ENCODE measurements at regions of chr3 and their contacts with region 1.

Region 1: DNA sequence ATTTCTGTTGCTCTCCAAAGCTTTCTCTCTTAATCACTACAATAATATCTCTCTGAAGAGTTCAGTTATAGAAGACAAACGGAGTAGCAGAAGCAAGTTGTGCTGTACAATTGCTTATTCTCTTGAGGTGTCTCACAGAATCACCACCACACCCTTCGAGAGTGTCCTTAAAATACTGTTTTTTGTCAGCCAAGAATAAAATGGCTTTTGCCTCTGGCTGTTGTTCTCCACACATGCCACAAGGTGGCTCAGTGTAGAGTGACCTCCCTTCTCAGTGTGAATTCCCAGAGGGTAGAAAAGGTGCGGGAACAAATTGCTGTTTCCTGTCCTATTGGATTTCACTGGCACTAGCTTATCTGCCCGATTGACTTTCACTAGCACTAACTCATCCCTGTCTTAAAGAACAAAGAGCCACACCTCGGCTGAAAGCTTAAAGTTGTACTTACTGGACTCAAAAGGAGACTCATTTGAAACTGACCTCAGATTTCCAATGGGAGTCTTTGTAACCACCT is 134.2 kb upstream of the SATB1 start:
- DNase-seq: peak; percentile 19
- H3K4me3 ChIP-seq: no peak overlapping the region
- H3K27ac ChIP-seq: no peak overlapping the region
- H3K4me1 ChIP-seq: peaks cover 0 to 4% (median 3%) of the 10 kb centered on the region in 4 donors
- H3K27me3 ChIP-seq: no peaks in the 10 kb centered on the region
- CTCF ChIP-seq: peak; percentile 73 to 89 (median 77)
- EP300 ChIP-seq: no peak
- POLR2A ChIP-seq: no peak

Region 2: DNA sequence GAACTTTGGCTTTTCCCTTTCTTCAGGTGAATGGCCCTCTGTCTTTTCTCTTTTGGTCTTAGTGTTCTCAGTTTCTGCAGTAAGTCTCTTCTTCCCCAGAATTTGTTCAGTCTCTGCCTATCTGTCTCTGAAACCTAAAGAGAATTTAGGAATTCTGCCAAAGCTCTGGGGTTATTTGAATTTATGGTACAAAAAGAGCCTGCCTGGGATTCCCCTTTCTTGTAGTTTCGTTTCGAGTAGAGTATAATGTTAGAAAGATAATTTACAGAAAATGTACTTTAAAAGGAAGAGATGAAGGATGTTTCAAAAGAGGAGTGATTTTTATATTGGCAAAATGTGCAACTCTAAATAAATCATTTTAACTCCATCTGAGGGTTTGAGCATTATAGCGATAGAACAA is 113.2 kb after region 1 on chr3:
- in situ Hi-C with region 1: no loop called
- intact Hi-C with region 1: no loop called
- DNase-seq: no peak
- H3K4me3 ChIP-seq: no peak overlapping the region
- H3K27ac ChIP-seq: no peak overlapping the region
- H3K4me1 ChIP-seq: no peaks in the 10 kb centered on the region
- H3K27me3 ChIP-seq: no peaks in the 10 kb centered on the region
- CTCF ChIP-seq: no peak
- EP300 ChIP-seq: no peak
- POLR2A ChIP-seq: no peak

Region 3: DNA sequence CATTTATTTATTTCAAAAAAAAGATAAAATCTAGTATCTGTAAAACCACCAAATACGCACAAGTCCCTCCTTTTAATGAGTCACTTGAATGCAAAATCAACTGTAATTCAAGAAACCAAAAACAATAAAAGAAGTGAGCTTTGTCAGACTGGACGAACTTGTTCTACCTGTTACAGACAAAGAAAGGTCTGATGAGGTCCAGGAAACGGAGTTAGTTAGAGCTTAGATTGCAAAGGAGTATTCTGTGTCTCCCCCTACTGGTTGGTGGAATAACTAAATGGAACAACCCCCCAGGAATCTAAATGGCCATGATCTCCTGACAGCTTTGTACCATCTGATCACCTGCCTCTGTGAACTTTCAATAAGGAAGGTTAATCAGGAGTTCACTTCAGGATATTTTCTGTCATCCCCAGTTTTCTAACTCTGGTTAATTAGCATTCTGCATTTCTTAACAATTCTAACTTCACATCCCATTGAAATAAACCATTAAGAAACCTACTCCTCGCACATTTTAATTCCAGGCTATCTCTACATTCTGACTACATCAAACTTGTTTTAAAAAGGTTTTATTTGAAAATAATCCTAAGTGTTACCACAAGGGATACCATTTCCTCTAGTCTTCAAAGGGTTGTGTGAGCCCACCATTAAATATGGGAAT is 198.8 kb after region 1 on chr3:
- in situ Hi-C with region 1: loop called (anchors 5 to 25 kb)
- intact Hi-C with region 1: no loop called
- DNase-seq: peak; percentile 10
- H3K4me3 ChIP-seq: no peak overlapping the region
- H3K27ac ChIP-seq: peak overlapping the region in 3 of 4 donors; percentile 52 to 70 (median 63)
- H3K4me1 ChIP-seq: peaks cover 0 to 20% (median 3%) of the 10 kb centered on the region in 4 donors
- H3K27me3 ChIP-seq: no peaks in the 10 kb centered on the region
- CTCF ChIP-seq: peak; percentile 51 to 91 (median 71)
- EP300 ChIP-seq: no peak
- POLR2A ChIP-seq: no peak